ENCODE measurements at regions of chr2 and their contacts with region 1.

Region 1: GRCh38 chr2:160918906-160919503 is 241.2 kb upstream of the TANK start:
- DNase-seq: peak; percentile 37
- ATAC-seq: peak; percentile 98
- H3K4me3 ChIP-seq: no peak overlapping the region
- H3K27ac ChIP-seq: no peak overlapping the region
- H3K4me1 ChIP-seq: no peaks in the 10 kb centered on the region
- H3K27me3 ChIP-seq: no peaks in the 10 kb centered on the region
- CTCF ChIP-seq: peak; percentile 74
- EP300 ChIP-seq: no peak
- POLR2A ChIP-seq: no peak
- RAD21 ChIP-seq: peak; percentile 48; the same call in 1 of the 2 replicates

Region 2: DNA sequence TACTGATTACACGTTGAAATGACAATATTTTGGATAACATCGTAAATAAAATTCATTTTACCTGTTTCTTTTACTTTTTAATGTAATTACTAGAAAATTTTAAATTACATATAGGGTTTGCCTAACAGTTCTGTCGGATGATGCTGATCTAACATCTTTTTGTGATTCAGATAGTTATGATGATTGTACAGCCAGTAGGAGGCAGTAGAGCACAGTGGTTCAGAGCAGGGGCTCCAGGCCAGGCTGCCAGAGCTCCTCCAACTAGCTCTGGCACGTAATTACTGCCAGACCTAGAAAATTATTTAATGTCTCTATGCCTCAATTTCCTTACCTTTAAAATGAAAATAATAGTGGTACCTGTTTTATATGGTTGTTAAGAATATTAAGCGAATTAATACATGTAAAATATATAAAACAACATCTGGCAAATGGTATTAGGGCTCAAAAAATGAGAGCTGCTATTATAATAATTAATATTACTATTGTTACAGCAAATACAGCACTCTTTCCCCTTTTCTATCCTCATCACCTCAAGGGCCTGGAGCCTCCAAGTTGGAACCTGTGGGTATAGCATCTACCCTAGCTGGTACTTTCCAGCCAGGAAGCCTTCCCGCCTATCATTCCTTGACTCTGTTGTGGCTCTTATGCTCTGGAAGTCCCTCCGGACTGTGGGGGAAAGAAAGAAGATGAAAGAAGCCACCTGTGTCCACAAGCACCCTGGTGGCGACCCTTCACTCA is 808.9 kb before region 1 on chr2:
- CTCF ChIA-PET with region 1: no interaction called
- POLR2A ChIA-PET with region 1: no interaction called
- in situ Hi-C with region 1: no loop called
- intact Hi-C with region 1: loop called (anchors 5 kb)
- DNase-seq: peak; percentile 62
- ATAC-seq: peak; percentile 97
- H3K4me3 ChIP-seq: no peak overlapping the region
- H3K27ac ChIP-seq: no peak overlapping the region
- H3K4me1 ChIP-seq: no peaks in the 10 kb centered on the region
- H3K27me3 ChIP-seq: peaks cover 0 to 8% of the 10 kb centered on the region in 2 experiments; a peak in 1 of 5 replicates
- CTCF ChIP-seq: peak; percentile 88
- EP300 ChIP-seq: no peak
- POLR2A ChIP-seq: no peak
- RAD21 ChIP-seq: peak; percentile 86

Region 3: GRCh38 chr2:160278879-160279177 is 640.2 kb before region 1 on chr2:
- CTCF ChIA-PET with region 1: no interaction called
- POLR2A ChIA-PET with region 1: no interaction called
- in situ Hi-C with region 1: no loop called
- intact Hi-C with region 1: loop called (anchors 1 kb)
- DNase-seq: peak; percentile 15
- ATAC-seq: peak; percentile 70
- H3K4me3 ChIP-seq: no peak overlapping the region
- H3K27ac ChIP-seq: no peak overlapping the region
- H3K4me1 ChIP-seq: peaks cover 13% of the 10 kb centered on the region
- H3K27me3 ChIP-seq: no peaks in the 10 kb centered on the region
- CTCF ChIP-seq: peak; percentile 41
- EP300 ChIP-seq: no peak
- POLR2A ChIP-seq: no peak
- RAD21 ChIP-seq: no peak

Region 4: DNA sequence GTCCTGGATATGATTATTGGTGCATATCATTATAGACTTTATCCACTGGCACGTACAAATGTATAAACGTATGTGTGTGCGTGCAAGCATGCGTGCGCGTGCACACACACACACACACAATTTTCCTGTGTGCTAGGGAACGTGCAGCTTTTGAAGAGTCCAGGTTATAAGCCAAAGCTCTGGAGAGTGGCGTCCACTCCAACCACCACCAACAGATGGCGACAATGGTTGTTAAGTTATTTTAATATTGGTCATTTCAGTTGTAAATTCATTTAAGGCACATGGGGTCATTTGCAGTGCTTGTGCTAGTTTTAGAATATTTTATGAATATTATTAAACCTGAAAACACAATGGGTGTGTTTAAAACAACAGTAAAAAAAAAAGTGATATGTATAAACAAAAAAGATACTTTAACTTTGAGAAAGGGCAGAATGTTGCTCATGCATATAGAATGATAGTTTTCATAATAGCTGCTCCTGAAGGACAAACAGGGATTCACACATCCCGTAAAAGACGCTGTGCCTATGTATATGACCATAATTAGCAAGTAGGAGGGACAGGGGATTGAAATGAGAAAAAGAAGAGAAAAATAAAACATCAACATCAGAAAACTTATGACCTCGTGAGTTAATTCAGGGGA is 594.7 kb before region 1 on chr2:
- CTCF ChIA-PET with region 1: no interaction called
- POLR2A ChIA-PET with region 1: no interaction called
- in situ Hi-C with region 1: no loop called
- intact Hi-C with region 1: loop called (anchors 1 kb)
- DNase-seq: peak; percentile 34
- ATAC-seq: peak; percentile 54
- H3K4me3 ChIP-seq: no peak overlapping the region
- H3K27ac ChIP-seq: no peak overlapping the region
- H3K4me1 ChIP-seq: peaks cover 35% of the 10 kb centered on the region
- H3K27me3 ChIP-seq: no peaks in the 10 kb centered on the region
- CTCF ChIP-seq: peak; percentile 74
- EP300 ChIP-seq: no peak
- POLR2A ChIP-seq: no peak
- RAD21 ChIP-seq: peak; percentile 65

Region 5: GRCh38 chr2:160353166-160353565 is 565.8 kb before region 1 on chr2:
- CTCF ChIA-PET with region 1: no interaction called
- POLR2A ChIA-PET with region 1: no interaction called
- in situ Hi-C with region 1: no loop called
- intact Hi-C with region 1: loop called (anchors 1 kb)
- DNase-seq: no peak
- ATAC-seq: peak; percentile 72
- H3K4me3 ChIP-seq: no peak overlapping the region
- H3K27ac ChIP-seq: no peak overlapping the region
- H3K4me1 ChIP-seq: no peaks in the 10 kb centered on the region
- H3K27me3 ChIP-seq: no peaks in the 10 kb centered on the region
- CTCF ChIP-seq: peak; percentile 42
- EP300 ChIP-seq: no peak
- POLR2A ChIP-seq: no peak
- RAD21 ChIP-seq: no peak

Region 6: DNA sequence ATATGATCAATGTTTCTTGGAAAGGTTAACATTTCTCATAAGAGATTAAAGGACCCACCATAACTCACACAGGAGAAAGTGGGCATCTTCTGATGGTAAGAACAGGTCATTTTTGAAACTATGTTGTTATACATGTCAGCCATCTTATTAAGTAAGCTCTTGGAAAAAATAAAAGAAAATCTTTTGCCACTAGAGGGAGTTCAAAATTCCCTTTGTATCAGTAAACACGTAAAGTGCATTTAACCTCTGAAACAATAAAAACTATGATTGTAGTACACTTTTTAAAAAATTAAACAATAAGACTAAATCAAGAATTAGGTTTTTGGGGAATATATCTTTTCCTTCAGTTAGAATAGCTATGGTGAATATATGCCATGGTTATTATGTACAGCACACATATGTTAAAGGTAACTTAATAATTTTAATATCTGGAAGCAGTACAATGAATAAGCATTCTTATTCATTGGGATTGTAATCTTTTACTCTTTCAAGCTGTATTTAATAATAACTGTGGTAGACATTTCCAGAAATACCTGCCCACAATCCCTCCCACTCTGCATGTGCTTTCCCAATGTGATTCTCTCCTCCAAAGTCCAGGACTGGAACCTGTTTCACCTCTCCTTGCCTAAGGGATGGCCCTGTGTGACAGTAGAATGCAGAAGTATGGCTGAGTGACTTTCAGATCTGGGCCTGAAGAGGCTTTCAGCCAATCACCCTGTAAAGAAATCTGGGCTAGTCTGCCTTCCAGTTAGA is 489.6 kb before region 1 on chr2:
- CTCF ChIA-PET with region 1: no interaction called
- POLR2A ChIA-PET with region 1: no interaction called
- in situ Hi-C with region 1: no loop called
- intact Hi-C with region 1: loop called (anchors 5 kb)
- DNase-seq: peak; percentile 52
- ATAC-seq: peak; percentile 60
- H3K4me3 ChIP-seq: no peak overlapping the region
- H3K27ac ChIP-seq: no peak overlapping the region
- H3K4me1 ChIP-seq: peaks cover 16% of the 10 kb centered on the region
- H3K27me3 ChIP-seq: no peaks in the 10 kb centered on the region
- CTCF ChIP-seq: peak; percentile 32
- EP300 ChIP-seq: no peak
- POLR2A ChIP-seq: no peak
- RAD21 ChIP-seq: no peak

Region 7: GRCh38 chr2:160842286-160842685 is 76.7 kb before region 1 on chr2:
- CTCF ChIA-PET with region 1: no interaction called
- POLR2A ChIA-PET with region 1: no interaction called
- in situ Hi-C with region 1: no loop called
- intact Hi-C with region 1: no loop called
- DNase-seq: no peak
- ATAC-seq: no peak
- H3K4me3 ChIP-seq: no peak overlapping the region
- H3K27ac ChIP-seq: no peak overlapping the region
- H3K4me1 ChIP-seq: peaks cover 10% of the 10 kb centered on the region; the same call in 1 of the 2 replicates
- H3K27me3 ChIP-seq: no peaks in the 10 kb centered on the region; a peak in 1 of 5 replicates
- CTCF ChIP-seq: no peak
- EP300 ChIP-seq: no peak
- POLR2A ChIP-seq: no peak
- RAD21 ChIP-seq: no peak

Measured in HepG2 (cell line).